ENCODE measurements at regions of chr1 and their contacts with region 1.

Region 1: GRCh38 chr1:204162231-204163074 is 3.7 kb downstream of the REN start:
- DNase-seq: peak; percentile 56
- ATAC-seq: peak; percentile 98
- H3K4me3 ChIP-seq: no peak overlapping the region
- H3K27ac ChIP-seq: no peak overlapping the region
- H3K4me1 ChIP-seq: no peaks in the 10 kb centered on the region
- H3K27me3 ChIP-seq: peaks cover 1% of the 10 kb centered on the region; the same call in 1 of the 2 replicates
- CTCF ChIP-seq: peak; percentile 99
- POLR2A ChIP-seq: peak; percentile 58
- RAD21 ChIP-seq: peak; percentile 99

Region 2: DNA sequence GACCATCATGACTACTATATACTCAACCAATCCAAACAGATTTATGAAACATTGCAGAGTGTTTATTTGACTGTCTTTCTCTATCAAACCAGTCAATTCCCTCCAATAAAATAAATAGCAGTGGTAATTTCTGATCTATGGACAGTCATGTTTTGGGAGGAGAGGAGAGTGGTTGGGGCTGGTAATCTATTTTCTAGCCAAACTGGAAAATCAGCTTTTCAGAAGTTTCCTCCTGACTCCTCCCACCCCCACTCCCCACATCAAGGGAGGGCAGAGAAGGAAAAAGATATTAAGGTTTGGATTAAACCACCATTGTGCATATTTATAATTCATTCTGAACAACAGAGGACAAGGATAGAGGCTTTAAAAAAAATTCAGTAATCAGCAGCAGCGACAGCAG is 158.9 kb before region 1 on chr1:
- CTCF ChIA-PET with region 1: no interaction called
- POLR2A ChIA-PET with region 1: no interaction called
- dilution Hi-C with region 1: no loop called
- in situ Hi-C with region 1: no loop called
- intact Hi-C with region 1: no loop called
- DNase-seq: no peak
- ATAC-seq: no peak
- H3K4me3 ChIP-seq: no peak overlapping the region
- H3K27ac ChIP-seq: no peak overlapping the region
- H3K4me1 ChIP-seq: no peaks in the 10 kb centered on the region
- H3K27me3 ChIP-seq: peaks cover 8% of the 10 kb centered on the region
- CTCF ChIP-seq: no peak
- POLR2A ChIP-seq: no peak
- RAD21 ChIP-seq: no peak

Region 3: DNA sequence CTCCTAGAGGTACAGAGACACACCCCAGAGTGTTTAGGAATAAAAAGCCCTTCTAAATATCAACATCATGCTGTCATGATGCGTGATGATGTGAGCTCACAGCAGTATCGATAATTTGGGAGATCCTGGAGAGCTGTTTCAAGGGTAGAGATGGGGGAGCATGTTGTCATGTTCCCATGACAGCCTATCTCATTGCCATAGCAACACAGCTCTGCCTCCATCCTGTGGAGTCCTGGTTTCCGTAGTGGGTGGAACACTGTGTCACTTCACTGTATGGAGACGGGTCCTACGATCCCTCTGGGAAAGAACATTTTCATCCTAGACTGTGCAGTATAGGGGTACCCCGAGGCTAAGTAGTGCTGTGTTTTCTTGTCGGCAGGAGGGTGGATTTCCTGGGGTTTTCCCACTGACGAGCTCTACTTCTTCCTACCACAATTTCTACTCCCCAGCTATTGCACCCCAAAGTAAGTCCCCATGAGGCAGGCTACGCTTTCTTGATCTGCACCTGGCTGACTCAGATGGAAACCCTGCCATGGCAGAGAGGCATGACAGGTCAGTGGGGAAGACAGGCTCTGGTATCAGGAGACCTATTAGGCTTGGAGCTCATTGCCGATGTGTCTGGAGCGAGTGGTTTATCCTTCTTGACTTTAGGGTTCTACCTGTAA is 26.7 kb after region 1 on chr1:
- CTCF ChIA-PET with region 1: no interaction called
- POLR2A ChIA-PET with region 1: interaction called, 10 read pairs
- dilution Hi-C with region 1: no loop called
- in situ Hi-C with region 1: no loop called
- intact Hi-C with region 1: no loop called
- DNase-seq: no peak
- ATAC-seq: no peak
- H3K4me3 ChIP-seq: no peak overlapping the region
- H3K27ac ChIP-seq: no peak overlapping the region
- H3K4me1 ChIP-seq: peaks cover 9% of the 10 kb centered on the region
- H3K27me3 ChIP-seq: peaks cover 3% of the 10 kb centered on the region; the same call in 1 of the 2 replicates
- CTCF ChIP-seq: no peak
- POLR2A ChIP-seq: no peak
- RAD21 ChIP-seq: no peak

Region 4: DNA sequence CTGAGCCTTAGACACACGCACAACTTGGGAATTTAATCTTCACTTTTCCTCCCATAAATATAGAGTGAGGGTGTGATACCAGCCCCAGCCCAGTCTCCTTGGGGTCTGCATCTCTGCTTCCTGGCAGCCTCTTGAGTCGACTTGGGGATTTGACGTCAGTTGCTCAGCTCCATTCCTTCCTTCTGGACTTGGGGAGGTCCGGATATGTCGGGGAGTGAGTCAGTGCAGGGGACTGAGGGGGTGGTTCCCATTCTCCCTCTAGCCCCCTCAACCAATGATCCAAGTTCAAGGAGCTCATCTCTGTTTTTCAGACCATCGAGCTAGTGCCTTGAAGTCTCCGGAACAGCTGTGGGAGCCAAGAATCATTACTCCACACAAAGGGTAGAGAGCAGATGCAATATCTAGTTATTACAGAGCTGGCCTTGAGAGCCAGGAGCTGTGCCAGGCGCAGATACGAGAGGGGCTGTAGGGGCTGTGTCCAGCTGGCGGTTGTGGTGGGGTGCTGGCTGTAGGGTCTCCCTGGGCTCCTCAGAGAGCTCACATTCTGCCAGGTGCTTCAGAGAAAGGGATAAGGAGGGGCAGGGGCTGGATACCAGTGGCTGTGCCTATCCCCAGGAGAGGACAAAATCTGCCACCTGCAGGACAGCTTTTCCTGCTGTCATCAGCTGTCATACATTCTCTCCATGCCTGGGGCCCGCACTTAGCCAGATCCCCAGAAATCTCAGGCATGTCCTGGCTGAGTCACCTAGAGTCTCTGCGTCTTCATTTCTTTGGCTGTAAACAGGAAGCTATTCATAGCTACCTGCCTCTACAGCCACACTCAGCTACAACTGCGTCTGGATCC is 35.9 kb after region 1 on chr1:
- CTCF ChIA-PET with region 1: interaction called, 12 read pairs
- POLR2A ChIA-PET with region 1: no interaction called
- dilution Hi-C with region 1: no loop called
- in situ Hi-C with region 1: no loop called
- intact Hi-C with region 1: no loop called
- DNase-seq: peak; percentile 91
- ATAC-seq: peak; percentile 82
- H3K4me3 ChIP-seq: no peak overlapping the region
- H3K27ac ChIP-seq: peak overlapping the region; percentile 41; the same call in 1 of the 2 replicates
- H3K4me1 ChIP-seq: peaks cover 37% of the 10 kb centered on the region
- H3K27me3 ChIP-seq: no peaks in the 10 kb centered on the region
- CTCF ChIP-seq: peak; percentile 34
- POLR2A ChIP-seq: no peak
- RAD21 ChIP-seq: peak; percentile 31

Region 5: GRCh38 chr1:204207136-204207616 is 44.7 kb after region 1 on chr1:
- CTCF ChIA-PET with region 1: interaction called, 32 read pairs
- POLR2A ChIA-PET with region 1: no interaction called
- dilution Hi-C with region 1: no loop called
- in situ Hi-C with region 1: loop called (anchors 5 kb)
- intact Hi-C with region 1: loop called (anchors 1 kb)
- DNase-seq: no peak
- ATAC-seq: peak; percentile 97
- H3K4me3 ChIP-seq: no peak overlapping the region
- H3K27ac ChIP-seq: no peak overlapping the region
- H3K4me1 ChIP-seq: peaks cover 3% of the 10 kb centered on the region; the same call in 1 of the 2 replicates
- H3K27me3 ChIP-seq: no peaks in the 10 kb centered on the region; the same call in 1 of the 2 replicates
- CTCF ChIP-seq: peak; percentile 82
- POLR2A ChIP-seq: no peak
- RAD21 ChIP-seq: peak; percentile 68

Region 6: GRCh38 chr1:204213668-204214662 is 51.5 kb after region 1 on chr1 and contains the start of gene GOLT1A:
- CTCF ChIA-PET with region 1: interaction called, 11 read pairs
- POLR2A ChIA-PET with region 1: no interaction called
- dilution Hi-C with region 1: no loop called
- in situ Hi-C with region 1: loop called (anchors 5 kb)
- intact Hi-C with region 1: no loop called
- DNase-seq: peak; percentile 87
- ATAC-seq: peak; percentile 97
- H3K4me3 ChIP-seq: no peak within 1 kb of the TSS
- H3K27ac ChIP-seq: no peak within 1 kb of the TSS
- H3K4me1 ChIP-seq: 0 out of 2 replicates have a peak, but pooled peaks cover 1% of the 10 kb centered on the region
- H3K27me3 ChIP-seq: no peaks in the 10 kb centered on the region; the same call in 1 of the 2 replicates
- CTCF ChIP-seq: peak; percentile 86
- POLR2A ChIP-seq: 0 out of 2 replicates have a peak, but pooled peaks have one; percentile 28
- RAD21 ChIP-seq: peak; percentile 86
- total RNA-seq, gene GOLT1A: not detected in 2 replicates

Region 7: GRCh38 chr1:204307334-204307883 is 145.0 kb after region 1 on chr1:
- CTCF ChIA-PET with region 1: no interaction called
- POLR2A ChIA-PET with region 1: no interaction called
- dilution Hi-C with region 1: no loop called
- in situ Hi-C with region 1: no loop called
- intact Hi-C with region 1: no loop called
- DNase-seq: peak; percentile 76
- ATAC-seq: peak; percentile 94
- H3K4me3 ChIP-seq: peak overlapping the region; percentile 39
- H3K27ac ChIP-seq: peak overlapping the region; percentile 38
- H3K4me1 ChIP-seq: peaks cover 11% of the 10 kb centered on the region
- H3K27me3 ChIP-seq: no peaks in the 10 kb centered on the region
- CTCF ChIP-seq: no peak; the same call in 1 of the 2 replicates
- POLR2A ChIP-seq: no peak
- RAD21 ChIP-seq: peak; percentile 23

Region 8: GRCh38 chr1:204398217-204399081 is 236.0 kb after region 1 on chr1:
- CTCF ChIA-PET with region 1: interaction called, 8 read pairs
- POLR2A ChIA-PET with region 1: no interaction called
- dilution Hi-C with region 1: loop called (anchors 25 kb)
- in situ Hi-C with region 1: no loop called
- intact Hi-C with region 1: loop called (anchors 1 kb)
- DNase-seq: peak; percentile 69
- ATAC-seq: peak; percentile 83
- H3K4me3 ChIP-seq: no peak overlapping the region
- H3K27ac ChIP-seq: no peak overlapping the region
- H3K4me1 ChIP-seq: no peaks in the 10 kb centered on the region
- H3K27me3 ChIP-seq: no peaks in the 10 kb centered on the region
- CTCF ChIP-seq: peak; percentile 71
- POLR2A ChIP-seq: no peak
- RAD21 ChIP-seq: peak; percentile 51

Region 9: DNA sequence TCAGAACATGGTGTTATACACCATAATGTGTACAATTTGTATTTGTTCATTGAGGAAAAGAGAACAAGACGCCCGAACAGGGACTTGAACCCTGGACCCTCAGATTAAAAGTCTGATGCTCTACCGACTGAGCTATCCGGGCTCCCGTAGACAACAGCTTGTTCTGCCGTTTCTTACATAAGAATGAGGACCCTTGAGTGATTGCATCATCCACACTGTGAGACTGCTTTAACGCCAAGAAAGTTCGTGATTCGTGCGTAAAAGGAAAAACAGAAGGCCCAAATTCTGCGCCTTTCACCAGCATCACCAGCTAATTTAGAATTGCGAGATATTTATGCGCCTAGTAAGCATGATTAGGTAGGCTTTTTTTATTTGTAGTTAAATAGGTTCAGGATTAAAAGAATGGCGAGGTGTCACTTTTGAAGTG is 344.5 kb after region 1 on chr1:
- CTCF ChIA-PET with region 1: interaction called, 3 read pairs
- POLR2A ChIA-PET with region 1: no interaction called
- dilution Hi-C with region 1: no loop called
- in situ Hi-C with region 1: no loop called
- intact Hi-C with region 1: loop called (anchors 5 kb)
- DNase-seq: peak; percentile 92
- ATAC-seq: peak; percentile 89
- H3K4me3 ChIP-seq: peak overlapping the region; percentile 48
- H3K27ac ChIP-seq: peak overlapping the region; percentile 49
- H3K4me1 ChIP-seq: no peaks in the 10 kb centered on the region
- H3K27me3 ChIP-seq: no peaks in the 10 kb centered on the region
- CTCF ChIP-seq: no peak
- POLR2A ChIP-seq: no peak; the same call in 1 of the 2 replicates
- RAD21 ChIP-seq: no peak